Esophagus muscularis mucosa (tissue), 4 donors: ENCODE measurements at regions of chr1 and their contacts with region 1.

Region 1: DNA sequence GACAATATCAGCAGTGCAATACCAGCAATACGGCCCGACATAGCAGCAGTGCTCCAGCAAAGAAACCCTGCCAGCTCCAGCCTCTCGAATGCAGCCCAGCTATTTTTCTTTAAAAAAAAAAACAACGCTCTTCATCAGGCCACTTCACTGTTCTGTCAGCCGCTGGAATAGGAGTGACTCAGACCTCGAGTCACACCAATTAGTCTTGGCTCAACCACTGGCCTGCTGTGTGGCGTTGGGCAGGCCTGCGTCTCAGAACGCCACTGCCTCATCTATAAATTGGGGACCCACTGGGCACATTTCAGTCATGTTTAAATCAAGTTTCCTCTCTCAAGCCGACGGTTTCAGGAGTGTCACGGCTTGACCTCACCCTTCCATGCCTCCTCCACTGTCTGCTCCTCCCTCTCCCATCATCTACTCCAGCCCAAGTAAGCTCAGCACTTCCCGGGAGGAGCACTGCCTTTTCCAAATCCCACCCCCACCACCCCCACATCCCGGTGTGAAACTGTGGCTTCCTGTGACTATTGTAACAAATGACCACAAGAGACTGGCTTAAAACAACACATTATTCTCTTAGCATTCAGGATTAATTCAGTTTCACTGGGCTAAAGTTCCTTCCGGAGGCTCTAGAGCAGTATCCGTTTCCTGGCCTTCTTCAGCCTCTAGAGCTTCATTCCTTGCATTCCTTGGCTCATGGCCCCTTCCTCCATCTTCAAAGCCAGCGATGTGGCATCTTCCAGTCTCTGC is 71.9 kb upstream of the EFHD2 start:
- DNase-seq: no peak
- H3K4me3 ChIP-seq: no peak overlapping the region
- H3K27ac ChIP-seq: peak overlapping the region; percentile 41 to 70 (median 55)
- H3K4me1 ChIP-seq: peaks cover 25 to 38% (median 30%) of the 10 kb centered on the region in 4 donors
- H3K27me3 ChIP-seq: no peaks in the 10 kb centered on the region
- CTCF ChIP-seq: no peak
- EP300 ChIP-seq: no peak
- POLR2A ChIP-seq: no peak

Region 2: GRCh38 chr1:15409388-15410222 is 71.8 kb after region 1 on chr1 and contains the start of gene EFHD2:
- intact Hi-C with region 1: loop called (anchors 5 kb)
- DNase-seq: no peak
- H3K4me3 ChIP-seq: peak within 1 kb of the TSS; percentile 78 to 99 (median 96)
- H3K27ac ChIP-seq: peak within 1 kb of the TSS; percentile 80 to 87 (median 84)
- H3K4me1 ChIP-seq: peaks cover 49 to 73% (median 63%) of the 10 kb centered on the region in 4 donors
- H3K27me3 ChIP-seq: no peaks in the 10 kb centered on the region
- CTCF ChIP-seq: no peak
- EP300 ChIP-seq: no peak
- POLR2A ChIP-seq: peak; percentile 28
- total RNA-seq, gene EFHD2: 30.3 to 57.4 (median 55.2) TPM